Activated naive CD4-positive, alpha-beta T cell treated with anti-CD3 and anti-CD28 coated beads for 36 hours (primary cell): ENCODE measurements at regions of chr5 and their contacts with region 1.

Region 1: GRCh38 chr5:146751781-146752401 is 126.7 kb downstream of the PPP2R2B start:
- DNase-seq: peak; percentile 61
- H3K4me3 Mint-ChIP-seq: no peak overlapping the region
- H3K27ac Mint-ChIP-seq: peak overlapping the region; percentile 63
- H3K4me1 Mint-ChIP-seq: peaks cover 40% of the 10 kb centered on the region
- H3K27me3 Mint-ChIP-seq: no peaks in the 10 kb centered on the region

Region 2: GRCh38 chr5:146699664-146700418 is 52.0 kb before region 1 on chr5:
- CTCF ChIA-PET with region 1: no interaction called
- intact Hi-C with region 1: loop called (anchors 5 kb)
- DNase-seq: no peak
- H3K4me3 Mint-ChIP-seq: no peak overlapping the region
- H3K27ac Mint-ChIP-seq: no peak overlapping the region
- H3K4me1 Mint-ChIP-seq: peaks cover 2% of the 10 kb centered on the region
- H3K27me3 Mint-ChIP-seq: no peaks in the 10 kb centered on the region

Region 3: GRCh38 chr5:146878476-146879172 is 126.7 kb after region 1 on chr5 and contains the start of gene PPP2R2B:
- CTCF ChIA-PET with region 1: no interaction called
- intact Hi-C with region 1: loop called (anchors 5 kb)
- DNase-seq: peak; percentile 40
- H3K4me3 Mint-ChIP-seq: peak within 1 kb of the TSS; percentile 80
- H3K27ac Mint-ChIP-seq: no peak within 1 kb of the TSS
- H3K4me1 Mint-ChIP-seq: peaks cover 11% of the 10 kb centered on the region
- H3K27me3 Mint-ChIP-seq: peaks cover 36% of the 10 kb centered on the region
- total RNA-seq, gene PPP2R2B: not detected